ENCODE measurements at regions of chr6 and their contacts with region 1.

Region 1: DNA sequence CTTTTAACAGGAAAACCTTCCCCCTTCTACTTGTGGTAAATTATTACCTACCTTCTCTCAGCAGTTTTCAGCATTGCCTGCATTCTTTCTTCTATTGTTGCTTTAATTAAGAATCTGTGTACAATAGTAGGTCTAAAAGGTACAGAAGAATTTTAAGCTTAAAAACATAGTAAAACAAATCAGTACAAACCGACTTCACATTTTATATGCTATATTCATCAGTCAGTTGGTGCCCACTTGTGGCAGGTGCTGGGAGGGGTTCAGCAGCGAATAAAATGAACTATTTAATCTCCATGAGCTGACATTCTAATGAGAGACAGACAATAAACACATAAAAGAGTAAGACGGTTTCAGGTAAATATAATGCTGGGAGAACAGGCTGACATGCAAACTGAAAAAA is 73.4 kb upstream of the FBXO30 start:
- DNase-seq: no peak
- H3K4me3 ChIP-seq: no peak overlapping the region
- H3K27ac ChIP-seq: no peak overlapping the region
- H3K4me1 ChIP-seq: no peaks in the 10 kb centered on the region
- H3K27me3 ChIP-seq: no peaks in the 10 kb centered on the region
- CTCF ChIP-seq: peak in 2 of 3 experiments; percentile 56 to 57

Region 2: GRCh38 chr6:145633981-145634627 is 253.9 kb before region 1 on chr6:
- intact Hi-C with region 1: loop called (anchors 10 kb)
- DNase-seq: peak in 1 of 2 donors; percentile 72
- H3K4me3 ChIP-seq: no peak overlapping the region
- H3K27ac ChIP-seq: no peak overlapping the region
- H3K4me1 ChIP-seq: no peaks in the 10 kb centered on the region
- H3K27me3 ChIP-seq: no peaks in the 10 kb centered on the region
- CTCF ChIP-seq: peak; percentile 39 to 78 (median 67)

Region 3: DNA sequence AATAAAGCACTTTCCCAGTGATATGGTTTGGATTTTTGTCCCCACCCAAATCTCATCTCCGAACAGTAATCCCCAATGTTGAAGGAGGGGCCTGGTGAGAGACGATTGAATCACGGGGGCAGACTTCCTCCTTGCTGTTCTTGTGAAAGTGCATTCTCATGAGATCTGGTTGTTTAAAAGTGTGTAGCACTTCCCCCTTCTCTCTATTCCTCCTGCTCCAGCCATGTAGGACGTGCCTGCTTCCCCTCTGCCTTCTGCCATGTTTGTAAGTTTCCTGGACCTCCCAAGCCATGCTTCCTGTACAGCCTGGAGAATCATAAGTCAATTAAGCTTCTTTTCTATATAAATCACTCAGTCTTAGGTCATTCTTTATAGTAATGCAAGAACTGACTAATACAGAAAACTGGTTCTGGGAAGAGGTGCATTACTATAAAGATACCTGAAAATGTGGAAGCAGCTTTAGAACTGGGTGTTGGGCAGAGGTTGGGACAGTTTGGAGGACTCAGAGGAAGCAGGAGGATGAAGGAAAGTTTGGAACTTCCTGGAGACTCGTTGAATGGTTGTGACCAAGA is 160.1 kb before region 1 on chr6:
- intact Hi-C with region 1: no loop called
- DNase-seq: no peak
- H3K4me3 ChIP-seq: no peak overlapping the region
- H3K27ac ChIP-seq: no peak overlapping the region
- H3K4me1 ChIP-seq: no peaks in the 10 kb centered on the region
- H3K27me3 ChIP-seq: no peaks in the 10 kb centered on the region
- CTCF ChIP-seq: no peak

Region 4: DNA sequence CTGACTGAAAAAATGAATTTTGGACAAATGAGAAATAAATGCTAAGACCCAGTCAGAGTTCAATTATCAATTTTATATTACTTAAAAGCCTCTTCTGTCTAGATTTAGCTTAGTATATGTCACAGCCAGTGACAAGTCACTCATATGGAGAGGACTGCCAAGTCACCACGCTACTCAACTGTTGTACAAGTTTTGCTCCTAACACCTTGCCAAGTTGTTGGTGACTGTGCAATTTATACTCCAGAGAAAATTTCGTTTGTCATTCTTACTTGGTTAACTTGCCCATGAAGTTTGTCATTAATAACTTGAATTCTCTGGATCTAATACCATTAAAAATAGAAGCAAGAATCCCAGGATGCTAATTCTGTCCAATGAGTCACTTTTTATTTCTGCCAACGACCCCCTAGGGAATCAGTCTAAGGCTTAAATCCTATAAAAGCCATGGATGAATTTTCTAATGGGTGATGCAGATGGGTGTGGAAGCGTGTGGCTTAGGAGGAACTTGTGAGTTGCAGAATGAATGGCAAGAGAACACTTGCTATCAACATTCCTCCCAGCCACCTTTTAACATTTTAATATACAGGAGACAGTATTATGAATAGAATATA is 42.9 kb before region 1 on chr6:
- intact Hi-C with region 1: no loop called
- DNase-seq: no peak
- H3K4me3 ChIP-seq: no peak overlapping the region
- H3K27ac ChIP-seq: no peak overlapping the region
- H3K4me1 ChIP-seq: peaks cover 0 to 13% of the 10 kb centered on the region in 2 donors
- H3K27me3 ChIP-seq: no peaks in the 10 kb centered on the region
- CTCF ChIP-seq: no peak

Measured in ascending aorta (tissue), 2 donors.